ENCODE measurements at regions of chr12 and their contacts with region 1.

Region 1: GRCh38 chr12:13534645-13535398 is 338.3 kb downstream of the EMP1 start:
- DNase-seq: peak; percentile 48 to 66
- ATAC-seq: peak in 7 of 8 donors; percentile 43 to 72 (median 56)
- H3K4me3 ChIP-seq: peak overlapping the region in 7 of 10 donors; percentile 14 to 40 (median 35)
- H3K27ac ChIP-seq: peak overlapping the region in 1 of 10 donors; percentile 26
- H3K4me1 ChIP-seq: peaks cover 0 to 5% (median 0%) of the 10 kb centered on the region in 9 donors
- H3K27me3 ChIP-seq: peaks cover 0 to 16% (median 4%) of the 10 kb centered on the region in 7 donors
- CTCF ChIP-seq: peak; percentile 60 to 97 (median 87)

Region 2: GRCh38 chr12:13255792-13256691 is 278.8 kb before region 1 on chr12:
- intact Hi-C with region 1: loop called in 1 of 10 experiments (anchors 5 kb)
- DNase-seq: peak; percentile 94 to 95
- ATAC-seq: peak; percentile 98 to 99 (median 99)
- H3K4me3 ChIP-seq: peak overlapping the region in 8 of 10 donors; percentile 8 to 49 (median 42)
- H3K27ac ChIP-seq: peak overlapping the region in 1 of 10 donors; percentile 24
- H3K4me1 ChIP-seq: peaks cover 0 to 29% (median 13%) of the 10 kb centered on the region in 9 donors
- H3K27me3 ChIP-seq: peaks cover 0 to 2% (median 0%) of the 10 kb centered on the region in 7 donors
- CTCF ChIP-seq: peak; percentile 87 to 99 (median 98)

Region 3: DNA sequence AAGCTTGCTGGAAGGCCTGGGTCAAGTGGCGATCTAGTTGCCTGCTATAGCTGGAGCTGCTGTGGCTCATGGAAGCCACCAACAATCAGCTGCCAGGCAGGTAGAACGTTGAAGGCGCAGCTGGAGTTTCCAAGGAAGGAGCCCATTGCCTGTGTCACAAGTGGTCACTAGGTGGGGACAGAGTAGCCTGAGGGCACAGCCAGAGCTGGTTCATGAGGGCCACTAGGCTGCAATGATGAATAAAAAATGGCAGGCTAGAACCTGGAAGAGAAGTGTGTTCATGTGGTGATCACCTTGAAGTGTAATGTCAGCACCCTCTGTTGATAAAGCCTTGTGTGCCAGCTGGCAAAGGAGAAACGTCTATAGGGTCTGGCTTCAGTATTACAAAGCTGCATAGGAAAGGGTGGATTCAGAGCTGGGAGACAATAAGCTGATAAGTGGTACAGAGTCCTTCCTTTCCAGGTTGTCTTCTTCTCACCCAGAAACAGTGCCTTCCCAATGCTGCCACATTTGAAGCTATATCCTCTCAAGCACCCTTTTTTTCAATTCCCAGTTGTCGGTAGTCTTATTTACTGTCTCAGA is 172.5 kb before region 1 on chr12:
- intact Hi-C with region 1: loop called in 7 of 10 experiments (anchors 1 to 10 kb)
- DNase-seq: peak; percentile 34
- ATAC-seq: peak in 6 of 8 donors; percentile 38 to 84 (median 68)
- H3K4me3 ChIP-seq: no peak overlapping the region
- H3K27ac ChIP-seq: no peak overlapping the region
- H3K4me1 ChIP-seq: no peaks in the 10 kb centered on the region
- H3K27me3 ChIP-seq: peaks cover 0 to 37% (median 24%) of the 10 kb centered on the region in 7 donors
- CTCF ChIP-seq: peak; percentile 54 to 80 (median 77)

Region 4: GRCh38 chr12:13478650-13479181 is 56.1 kb before region 1 on chr12:
- intact Hi-C with region 1: no loop called
- DNase-seq: no peak
- ATAC-seq: no peak
- H3K4me3 ChIP-seq: no peak overlapping the region
- H3K27ac ChIP-seq: no peak overlapping the region
- H3K4me1 ChIP-seq: no peaks in the 10 kb centered on the region
- H3K27me3 ChIP-seq: peaks cover 0 to 12% (median 0%) of the 10 kb centered on the region in 7 donors
- CTCF ChIP-seq: no peak

Region 5: GRCh38 chr12:13680916-13681315 is 146.1 kb after region 1 on chr12:
- intact Hi-C with region 1: no loop called
- DNase-seq: no peak
- ATAC-seq: no peak
- H3K4me3 ChIP-seq: no peak overlapping the region
- H3K27ac ChIP-seq: no peak overlapping the region
- H3K4me1 ChIP-seq: no peaks in the 10 kb centered on the region
- H3K27me3 ChIP-seq: peaks cover 0 to 5% (median 0%) of the 10 kb centered on the region in 7 donors
- CTCF ChIP-seq: no peak